Aorta (tissue), 5 donors: ENCODE measurements at regions of chr3 and their contacts with region 1.

Region 1: DNA sequence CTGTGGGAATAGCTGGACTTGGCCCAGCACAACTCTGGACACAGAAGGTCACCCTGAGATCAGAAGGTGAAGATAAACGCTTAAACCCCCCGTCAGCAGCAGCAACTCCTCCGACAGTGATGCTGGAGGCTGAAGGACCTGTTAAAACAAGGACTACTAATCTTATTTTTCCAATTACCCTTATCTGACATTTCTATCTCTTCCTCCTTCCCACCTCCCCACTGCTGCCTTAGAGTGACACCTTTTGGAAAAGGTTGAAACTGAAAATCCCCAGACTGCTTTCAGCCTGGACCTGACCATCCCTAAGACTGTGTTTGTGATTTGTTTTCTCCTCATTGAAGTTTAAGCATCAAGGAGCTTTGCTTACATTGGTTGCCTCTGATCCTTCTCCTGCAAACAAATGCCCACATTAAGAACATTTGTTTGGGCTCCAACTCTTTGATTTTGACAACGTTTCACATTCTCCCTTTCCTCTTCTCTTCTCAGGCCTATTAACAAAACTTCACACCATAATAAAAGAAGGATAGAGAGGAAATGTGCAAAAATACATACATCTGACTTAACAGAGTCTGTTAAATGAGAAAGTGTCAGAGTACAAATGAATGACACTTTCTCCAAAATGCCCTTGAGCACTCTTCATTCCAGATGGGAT is 410.6 kb upstream of the WNT5A start:
- DNase-seq: no peak
- ATAC-seq: no peak
- H3K4me3 ChIP-seq: no peak overlapping the region
- H3K27ac ChIP-seq: no peak overlapping the region
- H3K4me1 ChIP-seq: no peaks in the 10 kb centered on the region
- H3K27me3 ChIP-seq: no peaks in the 10 kb centered on the region

Region 2: DNA sequence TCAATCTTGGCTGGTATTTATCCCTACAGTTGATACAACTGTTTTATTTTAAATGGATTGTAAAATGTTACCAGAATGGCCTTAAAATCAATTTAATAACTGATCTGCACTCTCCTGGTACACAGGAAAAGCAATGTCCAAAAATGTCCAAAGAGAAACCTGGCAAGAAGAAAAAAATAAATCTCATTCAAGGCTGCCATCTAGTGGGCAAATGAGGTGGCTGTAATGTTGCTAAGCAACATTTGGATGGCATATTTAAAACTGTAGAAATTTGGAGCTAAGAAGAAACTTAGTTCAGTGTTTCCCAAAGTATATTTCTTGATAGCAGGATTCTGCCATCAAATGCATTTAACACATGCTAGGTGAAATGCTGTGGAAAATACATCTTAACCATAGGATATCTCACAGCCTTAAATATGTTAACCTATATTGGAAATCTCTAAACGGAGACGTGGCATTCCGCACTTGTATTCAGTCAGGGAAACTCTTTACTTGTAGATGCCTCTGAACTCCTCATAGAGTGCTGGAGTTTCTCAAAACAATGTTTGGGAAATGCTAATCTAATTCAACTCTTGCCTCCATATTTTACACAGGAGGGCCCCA is 353.7 kb after region 1 on chr3:
- intact Hi-C with region 1: loop called in 1 of 2 experiments (anchors 10 kb)
- DNase-seq: no peak
- ATAC-seq: no peak
- H3K4me3 ChIP-seq: no peak overlapping the region
- H3K27ac ChIP-seq: no peak overlapping the region
- H3K4me1 ChIP-seq: no peaks in the 10 kb centered on the region
- H3K27me3 ChIP-seq: no peaks in the 10 kb centered on the region